HepG2 (cell line): ENCODE measurements at regions of chr2 and their contacts with region 1.

Region 1: GRCh38 chr2:164495491-164496223 is 125.6 kb downstream of the GRB14 start:
- DNase-seq: peak; percentile 65
- ATAC-seq: peak; percentile 92
- H3K4me3 ChIP-seq: no peak overlapping the region
- H3K27ac ChIP-seq: no peak overlapping the region
- H3K4me1 ChIP-seq: no peaks in the 10 kb centered on the region
- H3K27me3 ChIP-seq: no peaks in the 10 kb centered on the region
- CTCF ChIP-seq: peak; percentile 65
- EP300 ChIP-seq: no peak
- POLR2A ChIP-seq: no peak
- RAD21 ChIP-seq: no peak; the same call in 1 of the 2 replicates

Region 2: DNA sequence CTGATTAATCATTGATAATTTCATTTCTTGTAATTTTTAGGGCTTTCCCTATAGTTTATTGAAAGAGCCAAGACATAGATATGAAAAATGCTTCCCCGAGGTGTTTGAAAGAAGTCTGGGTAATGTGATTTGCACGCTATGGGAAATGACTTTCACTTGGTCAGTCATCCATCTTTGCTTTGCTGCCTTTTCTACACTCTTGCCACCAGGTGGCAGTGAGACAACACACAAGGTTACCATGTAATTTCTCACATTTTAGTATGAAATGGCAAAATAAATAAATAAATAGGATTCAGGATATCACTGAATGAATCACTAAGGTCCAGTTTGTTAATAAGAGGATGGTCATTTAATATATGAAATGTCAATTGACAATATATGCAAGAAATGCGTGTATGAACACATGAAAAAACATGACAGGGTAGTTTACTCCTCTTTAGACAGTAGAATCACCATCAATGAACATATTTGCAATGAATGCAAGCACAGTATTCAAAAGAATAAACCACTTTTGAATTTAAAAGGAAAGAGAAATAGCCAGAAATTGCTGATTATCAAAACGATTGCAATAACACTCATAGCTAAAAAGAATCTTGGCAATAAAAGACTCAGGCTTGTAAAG is 1604.9 kb before region 1 on chr2:
- CTCF ChIA-PET with region 1: no interaction called
- POLR2A ChIA-PET with region 1: no interaction called
- in situ Hi-C with region 1: no loop called
- intact Hi-C with region 1: loop called (anchors 10 kb)
- DNase-seq: peak; percentile 62
- ATAC-seq: peak; percentile 86
- H3K4me3 ChIP-seq: no peak overlapping the region
- H3K27ac ChIP-seq: no peak overlapping the region
- H3K4me1 ChIP-seq: no peaks in the 10 kb centered on the region
- H3K27me3 ChIP-seq: no peaks in the 10 kb centered on the region; a peak in 1 of 5 replicates
- CTCF ChIP-seq: peak; percentile 86
- EP300 ChIP-seq: no peak
- POLR2A ChIP-seq: no peak
- RAD21 ChIP-seq: peak; percentile 51

Region 3: DNA sequence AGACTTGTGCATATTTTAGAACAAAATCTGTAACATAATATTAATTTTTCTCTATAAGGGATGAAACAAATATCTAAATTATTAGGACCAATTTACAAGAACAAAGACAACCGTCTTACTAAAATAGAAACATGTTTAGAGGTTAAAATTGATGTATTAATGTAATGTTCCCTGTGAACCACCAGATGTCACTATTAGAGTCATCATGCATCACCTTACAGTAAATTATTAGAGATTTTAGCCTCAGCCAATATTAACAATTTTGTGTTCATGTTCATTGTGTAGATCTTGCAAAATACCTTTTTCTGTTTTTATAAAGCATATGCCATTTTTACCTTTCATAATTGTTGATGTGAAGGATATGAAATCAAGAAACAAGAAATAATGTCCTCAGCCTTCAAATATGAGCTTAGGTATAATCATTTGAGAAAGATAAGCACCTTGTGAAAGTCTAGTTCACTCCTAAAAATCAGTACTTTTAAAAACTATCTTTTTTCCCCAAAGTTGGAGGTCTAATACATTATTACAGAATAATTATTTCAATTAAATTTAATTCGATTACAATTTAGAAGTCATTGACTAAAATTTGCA is 1312.8 kb before region 1 on chr2:
- CTCF ChIA-PET with region 1: no interaction called
- POLR2A ChIA-PET with region 1: no interaction called
- in situ Hi-C with region 1: loop called (anchors 10 kb)
- intact Hi-C with region 1: loop called (anchors 1 kb)
- DNase-seq: no peak
- ATAC-seq: no peak
- H3K4me3 ChIP-seq: no peak overlapping the region
- H3K27ac ChIP-seq: no peak overlapping the region
- H3K4me1 ChIP-seq: no peaks in the 10 kb centered on the region
- H3K27me3 ChIP-seq: no peaks in the 10 kb centered on the region
- CTCF ChIP-seq: peak; percentile 56
- EP300 ChIP-seq: no peak
- POLR2A ChIP-seq: no peak
- RAD21 ChIP-seq: no peak

Region 4: GRCh38 chr2:163345908-163346573 is 1149.6 kb before region 1 on chr2:
- CTCF ChIA-PET with region 1: no interaction called
- POLR2A ChIA-PET with region 1: no interaction called
- in situ Hi-C with region 1: loop called (anchors 25 kb)
- intact Hi-C with region 1: no loop called
- DNase-seq: peak; percentile 59
- ATAC-seq: peak; percentile 66
- H3K4me3 ChIP-seq: no peak overlapping the region
- H3K27ac ChIP-seq: no peak overlapping the region
- H3K4me1 ChIP-seq: no peaks in the 10 kb centered on the region
- H3K27me3 ChIP-seq: no peaks in the 10 kb centered on the region
- CTCF ChIP-seq: peak; percentile 72
- EP300 ChIP-seq: no peak
- POLR2A ChIP-seq: no peak
- RAD21 ChIP-seq: peak; percentile 42; the same call in 1 of the 2 replicates

Region 5: DNA sequence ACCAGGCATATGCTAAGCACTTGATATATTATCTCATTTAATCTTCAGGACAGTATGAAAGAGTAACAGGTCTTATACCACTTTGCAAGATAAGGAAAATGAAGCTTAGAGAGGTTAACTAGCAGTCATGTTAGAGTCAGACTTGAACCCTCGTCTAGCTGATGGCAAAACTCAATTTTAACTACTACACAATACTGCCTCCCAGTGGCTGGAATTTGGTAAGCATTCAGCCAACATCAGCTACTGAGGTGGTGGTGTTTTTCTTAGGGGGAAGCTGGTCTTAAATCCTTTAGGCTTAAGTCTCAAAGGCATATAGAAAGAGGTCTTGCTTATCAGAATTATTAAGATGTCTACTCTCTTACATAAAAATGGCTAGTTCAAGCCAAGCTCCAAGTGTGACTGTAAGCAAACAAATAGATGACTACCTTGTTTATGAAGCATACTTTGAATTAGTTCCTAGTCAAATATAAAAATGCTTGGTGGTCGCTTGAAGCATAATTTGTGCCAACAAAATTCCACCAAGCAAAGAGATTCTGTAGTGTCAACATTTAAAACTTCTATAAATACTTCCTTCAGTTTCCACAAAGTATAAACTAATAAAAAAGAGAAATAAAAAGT is 434.4 kb before region 1 on chr2:
- CTCF ChIA-PET with region 1: no interaction called
- POLR2A ChIA-PET with region 1: no interaction called
- in situ Hi-C with region 1: no loop called
- intact Hi-C with region 1: loop called (anchors 5 kb)
- DNase-seq: peak; percentile 53
- ATAC-seq: peak; percentile 78
- H3K4me3 ChIP-seq: no peak overlapping the region
- H3K27ac ChIP-seq: no peak overlapping the region
- H3K4me1 ChIP-seq: no peaks in the 10 kb centered on the region
- H3K27me3 ChIP-seq: no peaks in the 10 kb centered on the region
- CTCF ChIP-seq: peak; percentile 82
- EP300 ChIP-seq: no peak
- POLR2A ChIP-seq: no peak
- RAD21 ChIP-seq: peak; percentile 74

Region 6: DNA sequence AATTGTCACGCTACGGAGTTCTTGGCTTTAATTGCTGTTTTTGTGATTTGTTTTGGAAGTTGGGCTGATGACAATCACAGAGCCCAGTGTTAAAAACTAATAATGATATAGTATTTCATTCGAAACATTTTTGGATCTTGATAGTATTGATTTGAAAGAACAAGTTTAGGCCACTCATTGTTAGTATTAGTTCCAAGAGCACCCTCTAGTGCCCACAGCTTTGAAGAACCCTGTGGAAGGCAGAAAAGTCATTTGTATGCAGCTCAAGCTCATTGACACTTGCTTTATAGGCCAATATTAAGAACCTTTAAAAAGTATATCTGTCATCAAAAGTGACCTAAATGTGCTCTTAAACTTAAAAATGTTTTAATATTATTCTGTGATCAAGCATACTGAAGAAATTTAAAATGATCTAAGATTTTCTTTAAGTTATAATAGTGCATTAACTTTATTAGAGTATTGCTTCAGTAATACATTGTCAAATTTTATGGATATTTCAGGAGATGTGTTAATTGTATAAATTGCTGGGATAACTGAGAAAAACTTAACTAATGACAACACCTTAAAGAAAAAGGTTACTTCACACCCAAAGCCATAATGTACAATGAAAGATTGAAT is 65.4 kb before region 1 on chr2:
- CTCF ChIA-PET with region 1: no interaction called
- POLR2A ChIA-PET with region 1: no interaction called
- in situ Hi-C with region 1: no loop called
- intact Hi-C with region 1: loop called (anchors 1 kb)
- DNase-seq: peak; percentile 39
- ATAC-seq: peak; percentile 91
- H3K4me3 ChIP-seq: no peak overlapping the region
- H3K27ac ChIP-seq: no peak overlapping the region
- H3K4me1 ChIP-seq: no peaks in the 10 kb centered on the region
- H3K27me3 ChIP-seq: 0 out of 5 replicates have a peak, but pooled peaks cover 0 to 4% of the 10 kb centered on the region in 2 experiments
- CTCF ChIP-seq: peak; percentile 69
- EP300 ChIP-seq: no peak
- POLR2A ChIP-seq: no peak
- RAD21 ChIP-seq: no peak

Region 7: DNA sequence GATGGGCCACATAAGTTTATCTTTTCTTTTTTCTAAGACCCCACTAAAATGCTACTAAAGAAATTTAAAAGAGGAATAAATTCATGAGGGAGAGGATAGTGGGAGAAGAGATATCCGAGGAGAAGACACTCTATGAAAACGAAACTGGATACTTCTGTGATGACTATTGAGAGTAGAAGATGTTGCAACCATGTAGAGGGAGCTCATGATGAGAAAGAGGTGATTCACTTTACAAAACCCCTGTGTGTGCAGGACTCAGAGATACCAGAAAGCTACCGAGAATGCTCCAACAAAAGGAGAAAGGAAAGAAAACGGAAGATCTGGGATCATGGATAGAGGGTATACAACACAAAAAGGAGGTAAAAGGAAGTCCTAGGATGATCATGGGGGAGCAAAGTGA is 424.8 kb after region 1 on chr2:
- CTCF ChIA-PET with region 1: no interaction called
- POLR2A ChIA-PET with region 1: no interaction called
- in situ Hi-C with region 1: no loop called
- intact Hi-C with region 1: no loop called
- DNase-seq: peak; percentile 90
- ATAC-seq: peak; percentile 98
- H3K4me3 ChIP-seq: peak overlapping the region in 2 of 3 experiments; percentile 36 to 45; a peak in 3 of 6 replicates
- H3K27ac ChIP-seq: peak overlapping the region; percentile 69
- H3K4me1 ChIP-seq: peaks cover 30% of the 10 kb centered on the region
- H3K27me3 ChIP-seq: no peaks in the 10 kb centered on the region
- CTCF ChIP-seq: peak; percentile 31; the same call in 1 of the 2 replicates
- EP300 ChIP-seq: no peak
- POLR2A ChIP-seq: no peak
- RAD21 ChIP-seq: no peak